A549 (cell line): ENCODE measurements at regions of chr12 and their contacts with region 1.

Region 1: GRCh38 chr12:101839324-101840283 is 8.8 kb upstream of the GNPTAB start:
- DNase-seq: peak; percentile 65 to 69
- ATAC-seq: peak; percentile 76 to 88; a peak in 4 of 6 replicates
- H3K4me3 ChIP-seq: no peak overlapping the region
- H3K27ac ChIP-seq: no peak overlapping the region
- H3K4me1 ChIP-seq: no peaks in the 10 kb centered on the region
- CTCF ChIP-seq: peak; percentile 85
- EP300 ChIP-seq: no peak
- POLR2A ChIP-seq: no peak
- RAD21 ChIP-seq: peak; percentile 76 to 78

Region 2: GRCh38 chr12:101738920-101739665 is 100.5 kb before region 1 on chr12 and contains the start of gene SYCP3:
- CTCF ChIA-PET with region 1: no interaction called
- POLR2A ChIA-PET with region 1: no interaction called
- DNase-seq: no peak
- ATAC-seq: no peak; a peak in 1 of 6 replicates
- H3K4me3 ChIP-seq: no peak within 1 kb of the TSS
- H3K27ac ChIP-seq: no peak within 1 kb of the TSS
- H3K4me1 ChIP-seq: no peaks in the 10 kb centered on the region
- CTCF ChIP-seq: no peak
- EP300 ChIP-seq: no peak
- POLR2A ChIP-seq: no peak
- RAD21 ChIP-seq: no peak
- polyA plus RNA-seq, gene SYCP3: 0.13 and 0.14 TPM in 2 replicates

Region 3: GRCh38 chr12:101782273-101782731 is 57.3 kb before region 1 on chr12:
- CTCF ChIA-PET with region 1: interaction called, 10 read pairs
- POLR2A ChIA-PET with region 1: no interaction called
- DNase-seq: no peak
- ATAC-seq: no peak
- H3K4me3 ChIP-seq: no peak overlapping the region
- H3K27ac ChIP-seq: no peak overlapping the region
- H3K4me1 ChIP-seq: no peaks in the 10 kb centered on the region
- CTCF ChIP-seq: no peak
- EP300 ChIP-seq: no peak
- POLR2A ChIP-seq: no peak
- RAD21 ChIP-seq: no peak

Region 4: DNA sequence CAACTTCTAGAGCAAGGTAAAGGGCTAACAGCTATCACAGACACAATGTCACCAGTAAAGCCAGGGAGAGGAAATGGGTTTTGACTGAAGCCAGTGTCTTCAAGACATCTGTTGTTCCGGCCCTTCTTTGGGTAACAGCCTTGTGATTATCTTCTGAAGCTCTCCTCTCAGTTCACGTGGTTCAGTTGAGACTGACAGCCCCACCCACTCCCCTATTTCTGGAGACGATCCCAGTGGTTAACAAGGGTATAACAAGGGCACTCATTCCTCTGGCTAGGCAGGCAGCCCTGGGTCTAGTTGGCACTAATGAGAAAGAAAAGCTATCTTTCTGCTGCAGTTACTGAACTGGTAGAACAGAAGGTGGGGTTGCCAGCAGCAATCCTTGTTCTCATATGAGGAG is 15.7 kb before region 1 on chr12:
- CTCF ChIA-PET with region 1: interaction called, 59 read pairs
- POLR2A ChIA-PET with region 1: no interaction called
- DNase-seq: peak; percentile 63 to 82
- ATAC-seq: peak; percentile 91 to 99
- H3K4me3 ChIP-seq: no peak overlapping the region
- H3K27ac ChIP-seq: no peak overlapping the region
- H3K4me1 ChIP-seq: peaks cover 10% of the 10 kb centered on the region; the same call in 2 of the 3 replicates
- CTCF ChIP-seq: no peak
- EP300 ChIP-seq: no peak
- POLR2A ChIP-seq: no peak
- RAD21 ChIP-seq: no peak

Region 5: DNA sequence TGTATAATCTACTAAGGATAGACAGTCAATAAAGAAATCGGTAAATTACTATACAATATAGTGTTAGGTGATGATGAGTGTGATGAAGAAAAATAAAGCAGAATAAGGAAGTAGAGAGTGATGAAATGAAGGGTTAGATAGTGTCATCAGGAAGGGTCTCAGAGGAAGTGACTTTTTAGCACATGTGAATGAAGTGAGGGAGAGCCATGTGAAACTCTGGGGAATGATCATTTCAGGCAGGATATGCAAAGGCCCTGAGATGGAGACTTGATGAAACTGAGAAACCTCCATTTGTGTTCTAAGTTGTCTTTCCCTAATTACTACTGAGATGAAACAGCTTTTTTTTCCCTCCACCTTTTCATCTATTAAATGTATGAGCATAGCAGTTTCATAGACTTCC is 10.6 kb after region 1 on chr12:
- CTCF ChIA-PET with region 1: interaction called, 18 read pairs
- POLR2A ChIA-PET with region 1: no interaction called
- DNase-seq: no peak
- ATAC-seq: no peak
- H3K4me3 ChIP-seq: no peak overlapping the region
- H3K27ac ChIP-seq: no peak overlapping the region
- H3K4me1 ChIP-seq: peaks cover 3% of the 10 kb centered on the region; the same call in 2 of the 3 replicates
- CTCF ChIP-seq: no peak
- EP300 ChIP-seq: no peak
- POLR2A ChIP-seq: no peak
- RAD21 ChIP-seq: no peak

Region 6: DNA sequence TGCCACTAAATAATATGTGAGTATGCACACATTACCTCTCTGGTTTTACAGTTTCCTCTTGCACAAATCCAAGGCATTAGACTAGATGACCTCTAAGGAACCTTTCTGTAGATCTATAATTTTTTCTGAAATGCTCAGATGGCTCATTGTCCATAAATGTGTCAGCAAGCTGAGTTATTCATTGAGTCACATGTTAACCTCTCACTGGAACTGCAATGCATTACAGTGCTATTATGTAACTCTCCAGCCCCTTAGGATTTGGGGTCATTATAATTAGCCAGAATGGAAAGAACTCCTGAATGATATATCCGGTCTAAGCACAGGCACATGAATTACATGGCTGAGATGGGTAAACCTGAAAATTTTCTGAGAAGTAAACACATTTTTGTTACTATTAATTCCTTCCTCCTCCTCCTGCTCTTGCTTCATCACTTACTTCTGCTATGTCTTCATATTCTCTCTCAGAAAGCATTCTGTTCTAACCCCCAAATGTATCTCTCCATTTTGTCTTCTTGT is 17.5 kb after region 1 on chr12:
- CTCF ChIA-PET with region 1: interaction called, 18 read pairs
- POLR2A ChIA-PET with region 1: no interaction called
- DNase-seq: peak in 1 of 2 experiments; percentile 42
- ATAC-seq: peak; percentile 68 to 73; a peak in 4 of 6 replicates
- H3K4me3 ChIP-seq: no peak overlapping the region
- H3K27ac ChIP-seq: peak overlapping the region; percentile 48 to 78; a peak in 5 of 6 replicates
- H3K4me1 ChIP-seq: peaks cover 37% of the 10 kb centered on the region
- CTCF ChIP-seq: no peak
- EP300 ChIP-seq: no peak
- POLR2A ChIP-seq: no peak
- RAD21 ChIP-seq: no peak

Region 7: GRCh38 chr12:101866615-101867373 is 27.2 kb after region 1 on chr12:
- CTCF ChIA-PET with region 1: interaction called, 10 read pairs
- POLR2A ChIA-PET with region 1: no interaction called
- DNase-seq: no peak
- ATAC-seq: no peak; a peak in 1 of 6 replicates
- H3K4me3 ChIP-seq: no peak overlapping the region
- H3K27ac ChIP-seq: no peak overlapping the region
- H3K4me1 ChIP-seq: no peaks in the 10 kb centered on the region
- CTCF ChIP-seq: no peak
- EP300 ChIP-seq: no peak
- POLR2A ChIP-seq: no peak
- RAD21 ChIP-seq: no peak

Region 8: DNA sequence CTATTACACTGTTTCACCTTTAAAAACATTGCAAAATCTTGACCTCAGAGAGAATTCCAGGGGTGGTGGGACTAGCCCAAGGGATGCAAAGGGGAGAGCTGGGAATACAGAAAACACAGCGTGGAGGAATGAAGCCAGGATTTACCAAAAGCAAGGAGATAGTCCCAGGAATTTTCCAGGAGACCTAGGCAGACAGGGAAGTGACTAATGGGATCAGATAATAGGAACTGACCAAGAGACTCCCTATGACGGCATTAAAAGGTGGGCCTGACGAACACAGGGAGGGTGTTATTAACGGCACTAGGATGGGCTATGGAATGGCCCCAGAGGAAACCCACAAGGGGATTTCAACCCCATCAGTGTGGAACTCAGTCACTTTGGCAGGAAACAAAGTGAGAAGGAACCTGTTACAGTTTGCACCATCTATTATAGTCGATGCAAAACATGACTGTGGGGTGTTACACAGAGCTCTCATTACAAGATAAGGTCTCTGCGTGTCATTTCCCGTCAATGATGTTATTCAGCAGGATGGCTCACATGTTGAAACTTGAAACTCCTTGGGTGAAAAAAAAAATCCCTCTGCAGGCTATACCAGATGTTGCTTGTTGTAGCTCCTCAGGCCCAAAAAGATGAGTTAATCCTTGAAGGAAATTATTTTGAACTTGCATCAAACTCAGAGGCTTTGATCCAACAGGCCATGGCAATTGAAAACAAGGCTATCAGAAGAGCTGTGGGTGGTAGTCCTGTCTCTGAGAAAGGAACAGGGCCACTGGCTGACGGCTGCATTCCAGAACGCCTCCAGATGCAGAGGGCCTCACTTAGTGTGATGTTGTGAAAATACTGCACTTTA is 96.5 kb after region 1 on chr12:
- CTCF ChIA-PET with region 1: no interaction called
- POLR2A ChIA-PET with region 1: no interaction called
- DNase-seq: no peak
- ATAC-seq: no peak
- H3K4me3 ChIP-seq: no peak overlapping the region
- H3K27ac ChIP-seq: no peak overlapping the region
- H3K4me1 ChIP-seq: no peaks in the 10 kb centered on the region
- CTCF ChIP-seq: no peak
- EP300 ChIP-seq: no peak
- POLR2A ChIP-seq: no peak
- RAD21 ChIP-seq: no peak